Caco-2 (cell line): ENCODE measurements at regions of chr5 and their contacts with region 1.

Region 1: GRCh38 chr5:148179234-148179824 is 11.0 kb downstream of the SPINK14 start:
- DNase-seq: peak in 1 of 2 experiments; percentile 44
- H3K4me3 ChIP-seq: no peak overlapping the region
- H3K4me3 Mint-ChIP-seq: no peak overlapping the region
- H3K27ac Mint-ChIP-seq: no peak overlapping the region
- H3K4me1 ChIP-seq: no peaks in the 10 kb centered on the region
- H3K4me1 Mint-ChIP-seq: peaks cover 9% of the 10 kb centered on the region
- H3K27me3 ChIP-seq: no peaks in the 10 kb centered on the region
- H3K27me3 Mint-ChIP-seq: no peaks in the 10 kb centered on the region
- CTCF ChIP-seq: peak; percentile 64 to 69

Region 2: DNA sequence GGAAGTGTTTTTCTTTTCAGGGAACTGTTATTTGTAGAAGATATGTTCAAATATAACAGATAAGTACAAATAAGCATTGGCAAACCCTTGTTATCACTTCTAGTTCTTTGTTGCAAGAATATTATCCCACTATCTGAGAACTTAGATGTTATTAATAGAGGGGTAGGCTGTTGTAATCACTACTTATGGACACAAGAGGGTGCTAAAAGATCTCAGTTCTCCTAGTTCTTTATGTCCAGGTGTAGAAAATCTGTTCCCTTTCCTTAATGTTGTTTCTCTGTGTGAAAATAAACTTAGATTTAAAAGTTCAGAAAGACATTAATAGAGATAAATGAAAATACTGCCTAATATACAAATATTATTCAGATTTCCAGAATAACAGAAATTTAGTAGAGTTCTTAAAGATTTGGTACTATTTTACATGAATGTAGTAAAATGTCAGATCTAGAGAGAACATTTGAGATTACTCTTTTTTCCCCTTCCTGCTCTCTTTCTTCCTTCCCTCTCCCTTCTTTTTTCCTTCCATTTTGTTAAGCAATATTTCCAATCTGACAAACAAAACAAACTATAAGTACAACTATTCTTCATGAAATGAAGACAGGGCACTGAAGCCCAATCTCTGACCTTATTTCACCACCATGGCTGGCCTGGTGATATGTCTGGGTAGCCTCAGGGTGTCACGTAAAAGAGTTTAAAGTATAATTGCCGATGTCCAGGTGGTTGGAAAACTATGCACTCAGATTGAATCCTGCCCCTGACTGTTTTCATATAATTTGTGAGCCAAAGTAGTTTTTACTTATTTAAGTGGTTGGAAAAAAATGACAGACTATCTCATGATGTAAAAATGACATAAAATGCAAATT is 229.4 kb before region 1 on chr5:
- CTCF ChIA-PET with region 1: no interaction called
- POLR2A ChIA-PET with region 1: no interaction called
- intact Hi-C with region 1: loop called (anchors 2 kb)
- DNase-seq: peak in 1 of 2 experiments; percentile 36
- H3K4me3 ChIP-seq: no peak overlapping the region
- H3K4me3 Mint-ChIP-seq: no peak overlapping the region
- H3K27ac Mint-ChIP-seq: no peak overlapping the region
- H3K4me1 ChIP-seq: no peaks in the 10 kb centered on the region
- H3K4me1 Mint-ChIP-seq: peaks cover 6% of the 10 kb centered on the region
- H3K27me3 ChIP-seq: no peaks in the 10 kb centered on the region
- H3K27me3 Mint-ChIP-seq: no peaks in the 10 kb centered on the region
- CTCF ChIP-seq: peak; percentile 66 to 67

Region 3: DNA sequence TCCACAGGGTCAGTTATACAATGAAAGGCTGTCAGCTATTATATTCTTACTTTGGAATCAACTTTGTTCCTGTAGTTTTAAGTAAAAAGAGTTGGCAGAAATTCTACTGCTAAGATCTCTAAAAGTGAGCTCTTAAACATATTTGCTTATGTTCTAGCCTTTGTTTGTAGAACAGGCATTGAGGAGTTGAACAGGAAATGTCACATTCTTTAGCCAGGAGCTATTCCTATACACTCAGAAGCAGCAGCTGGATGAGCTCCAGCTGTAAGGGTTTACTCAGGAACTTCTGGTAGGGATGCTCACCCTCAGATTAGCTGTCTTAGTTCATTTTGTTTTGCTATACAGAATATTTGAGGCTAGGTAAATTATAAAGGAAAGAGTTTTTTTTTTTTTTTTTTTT is 33.4 kb before region 1 on chr5:
- CTCF ChIA-PET with region 1: no interaction called
- POLR2A ChIA-PET with region 1: no interaction called
- intact Hi-C with region 1: loop called (anchors 1 kb)
- DNase-seq: peak; percentile 71 to 77
- H3K4me3 ChIP-seq: no peak overlapping the region
- H3K4me3 Mint-ChIP-seq: peak overlapping the region; percentile 57
- H3K27ac Mint-ChIP-seq: peak overlapping the region; percentile 90
- H3K4me1 ChIP-seq: peaks cover 53% of the 10 kb centered on the region
- H3K4me1 Mint-ChIP-seq: peaks cover 44% of the 10 kb centered on the region
- H3K27me3 ChIP-seq: no peaks in the 10 kb centered on the region
- H3K27me3 Mint-ChIP-seq: no peaks in the 10 kb centered on the region
- CTCF ChIP-seq: no peak

Region 4: GRCh38 chr5:148259288-148259687 is 80.0 kb after region 1 on chr5:
- CTCF ChIA-PET with region 1: no interaction called
- POLR2A ChIA-PET with region 1: no interaction called
- intact Hi-C with region 1: no loop called
- DNase-seq: no peak
- H3K4me3 ChIP-seq: no peak overlapping the region
- H3K4me3 Mint-ChIP-seq: no peak overlapping the region
- H3K27ac Mint-ChIP-seq: no peak overlapping the region
- H3K4me1 ChIP-seq: no peaks in the 10 kb centered on the region
- H3K4me1 Mint-ChIP-seq: no peaks in the 10 kb centered on the region
- H3K27me3 ChIP-seq: no peaks in the 10 kb centered on the region
- H3K27me3 Mint-ChIP-seq: no peaks in the 10 kb centered on the region
- CTCF ChIP-seq: no peak

Region 5: DNA sequence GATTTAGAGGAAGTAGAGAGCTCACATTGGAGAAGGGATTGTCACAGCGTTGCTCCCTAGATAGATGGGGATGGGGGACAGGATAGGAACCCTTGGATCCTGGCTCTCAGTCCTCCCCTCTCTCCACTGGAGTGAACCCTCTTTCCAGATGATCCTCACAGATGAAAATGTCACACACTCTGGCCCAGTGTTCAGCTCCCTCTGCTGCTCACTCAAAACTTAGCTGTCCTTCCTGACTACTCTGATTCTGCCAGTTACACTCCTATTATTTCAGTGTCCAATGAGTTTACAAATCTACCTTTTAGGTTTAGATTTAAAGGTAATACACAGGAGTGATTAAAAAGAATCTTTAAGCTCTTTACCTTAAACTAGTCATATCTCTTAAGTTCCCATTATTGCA is 127.1 kb after region 1 on chr5:
- CTCF ChIA-PET with region 1: no interaction called
- POLR2A ChIA-PET with region 1: no interaction called
- intact Hi-C with region 1: loop called (anchors 1 kb)
- DNase-seq: no peak
- H3K4me3 ChIP-seq: no peak overlapping the region
- H3K4me3 Mint-ChIP-seq: no peak overlapping the region
- H3K27ac Mint-ChIP-seq: no peak overlapping the region
- H3K4me1 ChIP-seq: no peaks in the 10 kb centered on the region
- H3K4me1 Mint-ChIP-seq: no peaks in the 10 kb centered on the region
- H3K27me3 ChIP-seq: no peaks in the 10 kb centered on the region
- H3K27me3 Mint-ChIP-seq: peaks cover 9% of the 10 kb centered on the region
- CTCF ChIP-seq: no peak

Region 6: DNA sequence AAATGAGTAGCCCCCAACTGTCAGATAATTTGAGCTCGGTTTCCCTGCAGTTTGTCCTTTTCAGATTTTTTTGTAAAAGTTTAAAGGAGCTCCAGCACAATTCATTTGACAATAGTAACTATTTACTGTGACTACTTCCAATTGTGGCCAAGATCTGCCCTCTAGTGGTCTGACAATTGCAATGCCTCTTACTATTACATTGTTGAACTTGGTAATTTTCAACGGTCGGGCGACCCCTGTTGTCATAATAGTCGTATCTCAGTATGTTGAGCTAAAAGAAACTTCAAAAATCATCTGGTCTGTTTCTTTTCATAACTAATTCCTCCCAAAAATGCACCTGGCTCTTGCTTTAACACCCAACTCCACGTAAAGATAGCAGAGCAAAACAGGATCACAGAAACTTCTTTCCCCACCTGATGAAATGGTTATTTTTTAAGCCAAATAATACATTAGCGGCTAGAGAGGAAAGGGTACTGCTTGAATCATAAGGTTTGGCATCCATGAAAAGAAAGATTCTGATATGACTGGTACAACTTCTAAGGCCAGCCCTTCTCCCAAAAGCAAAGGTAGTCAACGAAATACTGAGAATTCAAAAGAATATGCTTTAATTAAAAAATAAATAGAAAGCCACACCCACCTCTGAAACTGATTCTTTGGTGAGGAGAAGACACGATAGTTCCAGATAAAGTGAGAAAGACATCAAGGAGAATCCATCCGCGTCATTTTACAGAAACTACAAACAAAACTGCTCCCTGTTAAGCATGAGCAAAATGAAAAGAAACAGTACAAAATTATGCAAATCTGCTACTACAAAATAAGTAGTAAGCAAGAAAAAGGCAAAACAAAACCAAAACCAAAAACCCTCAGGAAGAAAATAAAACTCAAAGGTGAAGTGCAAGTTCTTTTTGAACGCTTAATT is 551.9 kb after region 1 on chr5:
- CTCF ChIA-PET with region 1: interaction called, 7 read pairs
- POLR2A ChIA-PET with region 1: no interaction called
- intact Hi-C with region 1: loop called (anchors 1 kb)
- DNase-seq: peak; percentile 76 to 78
- H3K4me3 ChIP-seq: no peak overlapping the region
- H3K4me3 Mint-ChIP-seq: no peak overlapping the region
- H3K27ac Mint-ChIP-seq: no peak overlapping the region
- H3K4me1 ChIP-seq: no peaks in the 10 kb centered on the region
- H3K4me1 Mint-ChIP-seq: no peaks in the 10 kb centered on the region
- H3K27me3 ChIP-seq: no peaks in the 10 kb centered on the region
- H3K27me3 Mint-ChIP-seq: peaks cover 15% of the 10 kb centered on the region
- CTCF ChIP-seq: peak; percentile 89 to 98